Psoas muscle (tissue), 8 donors: ENCODE measurements at regions of chr14 and their contacts with region 1.

Region 1: GRCh38 chr14:69535230-69535848 is 39.3 kb downstream of the CCDC177 start:
- DNase-seq: peak in 1 of 2 donors; percentile 30
- ATAC-seq: peak; percentile 56 to 76 (median 72)
- H3K4me3 ChIP-seq: no peak overlapping the region
- H3K27ac ChIP-seq: no peak overlapping the region
- H3K4me1 ChIP-seq: peaks cover 4% of the 10 kb centered on the region
- H3K27me3 ChIP-seq: no peaks in the 10 kb centered on the region
- CTCF ChIP-seq: peak; percentile 52

Region 2: DNA sequence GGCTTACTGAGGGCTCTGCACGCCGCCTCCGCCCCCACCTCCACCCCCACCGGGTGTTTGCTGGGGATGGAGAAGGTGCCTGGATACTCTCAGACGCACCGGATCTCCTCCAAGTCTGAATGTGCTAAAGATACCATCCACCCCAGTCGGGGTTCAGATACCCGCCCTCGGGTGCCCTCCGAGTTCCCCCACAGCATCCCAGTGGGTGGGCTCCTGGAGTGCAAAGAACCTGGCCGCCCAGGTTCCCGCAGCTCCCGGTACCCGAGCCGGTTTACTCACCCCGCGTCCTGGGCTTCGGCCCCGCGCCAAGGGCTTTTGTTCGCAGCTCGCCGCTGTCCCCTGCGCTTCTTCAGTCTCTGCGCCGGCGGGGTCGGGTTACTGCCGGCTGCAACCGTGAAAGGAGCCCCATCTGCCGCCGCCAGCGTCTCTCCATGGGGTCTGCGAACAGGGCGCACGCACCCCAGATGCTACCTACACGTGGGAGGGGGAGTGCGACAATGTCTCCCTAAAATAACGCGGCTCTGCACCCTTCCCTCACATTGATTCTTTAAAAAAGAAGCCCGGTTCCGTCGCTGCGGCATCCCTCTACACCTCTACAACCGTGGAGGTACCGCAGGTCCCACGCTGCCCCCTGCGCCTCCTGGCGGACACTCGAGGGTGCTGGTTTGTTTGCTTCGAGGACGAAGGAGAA is 39.1 kb after region 1 on chr14 and contains the start of gene CCDC177:
- intact Hi-C with region 1: loop called (anchors 2 to 5 kb)
- DNase-seq: peak; percentile 53 to 70
- ATAC-seq: peak; percentile 47 to 79 (median 66)
- H3K4me3 ChIP-seq: peak within 1 kb of the TSS; percentile 66
- H3K27ac ChIP-seq: no peak within 1 kb of the TSS
- H3K4me1 ChIP-seq: peaks cover 29% of the 10 kb centered on the region
- H3K27me3 ChIP-seq: peaks cover 0 to 77% (median 26%) of the 10 kb centered on the region in 3 donors
- CTCF ChIP-seq: peak; percentile 84
- total RNA-seq, gene CCDC177: not detected

Region 3: GRCh38 chr14:69708586-69709174 is 173.3 kb after region 1 on chr14:
- intact Hi-C with region 1: no loop called
- DNase-seq: no peak
- ATAC-seq: peak in 1 of 4 donors; percentile 18
- H3K4me3 ChIP-seq: no peak overlapping the region
- H3K27ac ChIP-seq: no peak overlapping the region
- H3K4me1 ChIP-seq: peaks cover 31% of the 10 kb centered on the region
- H3K27me3 ChIP-seq: no peaks in the 10 kb centered on the region
- CTCF ChIP-seq: no peak